ENCODE measurements at regions of chr1 and their contacts with region 1.

Region 1: DNA sequence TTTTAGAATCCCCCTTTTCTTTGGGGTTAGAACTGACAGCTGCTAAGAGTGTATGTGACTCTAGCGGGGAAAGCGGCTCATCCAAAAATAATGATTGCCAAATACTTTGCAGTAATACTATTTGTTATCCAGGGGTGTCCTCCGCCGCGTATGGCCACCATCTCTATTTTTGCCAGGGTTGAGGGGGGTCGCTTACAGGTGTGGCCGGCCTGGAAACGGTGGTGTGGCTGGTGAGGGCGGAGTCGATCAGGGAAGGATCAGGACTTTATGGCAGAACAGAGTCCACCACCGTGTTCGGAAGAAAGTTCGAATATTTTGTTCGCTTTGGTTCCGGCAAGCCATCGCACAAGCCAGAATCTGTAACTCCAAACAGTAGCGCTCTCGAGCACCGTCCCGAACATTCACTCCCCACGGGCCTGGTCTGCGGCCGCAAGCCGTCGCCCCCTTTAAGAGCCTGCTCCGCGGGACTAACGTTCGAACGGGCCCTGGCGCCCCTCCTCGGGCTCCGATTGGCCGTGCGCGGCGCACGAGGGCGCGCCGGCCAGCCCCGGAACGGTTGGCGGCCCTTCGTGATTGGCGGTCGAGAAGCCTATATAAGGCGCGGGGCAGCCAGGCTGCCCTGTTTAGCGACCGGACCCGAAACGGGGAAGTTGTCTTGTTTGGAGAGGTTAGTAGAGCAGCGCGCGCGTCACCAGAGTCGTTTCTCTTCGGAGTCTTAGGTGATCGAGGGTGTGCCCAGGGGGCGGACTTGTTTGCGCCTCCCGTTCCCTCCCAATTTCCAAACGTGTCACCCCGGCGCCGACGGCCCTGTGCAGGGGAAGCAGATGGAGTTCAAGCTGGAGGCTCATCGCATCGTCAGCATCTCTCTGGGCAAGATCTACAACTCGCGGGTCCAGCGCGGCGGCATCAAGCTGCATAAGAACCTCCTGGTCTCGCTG is at the start of gene IER5:
- DNase-seq: peak; percentile 99
- H3K4me3 Mint-ChIP-seq: peak within 1 kb of the TSS; percentile 100
- H3K27ac Mint-ChIP-seq: peak within 1 kb of the TSS; percentile 99
- H3K4me1 Mint-ChIP-seq: peaks cover 43% of the 10 kb centered on the region
- H3K27me3 Mint-ChIP-seq: no peaks in the 10 kb centered on the region
- CTCF ChIP-seq: no peak
- total RNA-seq, gene IER5: 47.5 and 49.5 TPM in 2 replicates

Region 2: GRCh38 chr1:180502360-180503273 is 585.7 kb before region 1 on chr1 and contains the start of gene ACBD6:
- CTCF ChIA-PET with region 1: interaction called, 3 read pairs
- POLR2A ChIA-PET with region 1: interaction called, 18 read pairs
- intact Hi-C with region 1: no loop called
- DNase-seq: peak; percentile 94
- H3K4me3 Mint-ChIP-seq: peak within 1 kb of the TSS; percentile 94
- H3K27ac Mint-ChIP-seq: peak within 1 kb of the TSS; percentile 97
- H3K4me1 Mint-ChIP-seq: peaks cover 29% of the 10 kb centered on the region
- H3K27me3 Mint-ChIP-seq: no peaks in the 10 kb centered on the region
- CTCF ChIP-seq: no peak
- total RNA-seq, gene ACBD6: 123 and 136 TPM in 2 replicates

Region 3: GRCh38 chr1:181021811-181022434 is 66.4 kb before region 1 on chr1:
- CTCF ChIA-PET with region 1: interaction called, 8 read pairs
- POLR2A ChIA-PET with region 1: interaction called, 250 read pairs
- intact Hi-C with region 1: loop called (anchors 1 kb)
- DNase-seq: peak; percentile 86
- H3K4me3 Mint-ChIP-seq: peak overlapping the region; percentile 93
- H3K27ac Mint-ChIP-seq: peak overlapping the region; percentile 91
- H3K4me1 Mint-ChIP-seq: peaks cover 19% of the 10 kb centered on the region
- H3K27me3 Mint-ChIP-seq: no peaks in the 10 kb centered on the region
- CTCF ChIP-seq: no peak

Region 4: GRCh38 chr1:181077576-181078242 is 10.6 kb before region 1 on chr1:
- CTCF ChIA-PET with region 1: interaction called, 3 read pairs
- POLR2A ChIA-PET with region 1: interaction called, 34 read pairs
- intact Hi-C with region 1: no loop called
- DNase-seq: no peak
- H3K4me3 Mint-ChIP-seq: peak overlapping the region; percentile 2
- H3K27ac Mint-ChIP-seq: peak overlapping the region; percentile 74
- H3K4me1 Mint-ChIP-seq: peaks cover 37% of the 10 kb centered on the region
- H3K27me3 Mint-ChIP-seq: no peaks in the 10 kb centered on the region
- CTCF ChIP-seq: no peak

Region 5: GRCh38 chr1:181112071-181112929 is 24.0 kb after region 1 on chr1:
- CTCF ChIA-PET with region 1: interaction called, 21 read pairs
- POLR2A ChIA-PET with region 1: interaction called, 1,371 read pairs
- intact Hi-C with region 1: loop called (anchors 1 kb)
- DNase-seq: peak; percentile 100
- H3K4me3 Mint-ChIP-seq: peak overlapping the region; percentile 48
- H3K27ac Mint-ChIP-seq: peak overlapping the region; percentile 86
- H3K4me1 Mint-ChIP-seq: peaks cover 51% of the 10 kb centered on the region
- H3K27me3 Mint-ChIP-seq: no peaks in the 10 kb centered on the region
- CTCF ChIP-seq: no peak

Region 6: GRCh38 chr1:181159451-181160140 is 71.2 kb after region 1 on chr1:
- CTCF ChIA-PET with region 1: interaction called, 5 read pairs
- POLR2A ChIA-PET with region 1: interaction called, 1,402 read pairs
- intact Hi-C with region 1: no loop called
- DNase-seq: peak; percentile 94
- H3K4me3 Mint-ChIP-seq: peak overlapping the region; percentile 35
- H3K27ac Mint-ChIP-seq: peak overlapping the region; percentile 71
- H3K4me1 Mint-ChIP-seq: peaks cover 22% of the 10 kb centered on the region
- H3K27me3 Mint-ChIP-seq: no peaks in the 10 kb centered on the region
- CTCF ChIP-seq: no peak